ENCODE measurements at regions of chr12 and their contacts with region 1.

Region 1: DNA sequence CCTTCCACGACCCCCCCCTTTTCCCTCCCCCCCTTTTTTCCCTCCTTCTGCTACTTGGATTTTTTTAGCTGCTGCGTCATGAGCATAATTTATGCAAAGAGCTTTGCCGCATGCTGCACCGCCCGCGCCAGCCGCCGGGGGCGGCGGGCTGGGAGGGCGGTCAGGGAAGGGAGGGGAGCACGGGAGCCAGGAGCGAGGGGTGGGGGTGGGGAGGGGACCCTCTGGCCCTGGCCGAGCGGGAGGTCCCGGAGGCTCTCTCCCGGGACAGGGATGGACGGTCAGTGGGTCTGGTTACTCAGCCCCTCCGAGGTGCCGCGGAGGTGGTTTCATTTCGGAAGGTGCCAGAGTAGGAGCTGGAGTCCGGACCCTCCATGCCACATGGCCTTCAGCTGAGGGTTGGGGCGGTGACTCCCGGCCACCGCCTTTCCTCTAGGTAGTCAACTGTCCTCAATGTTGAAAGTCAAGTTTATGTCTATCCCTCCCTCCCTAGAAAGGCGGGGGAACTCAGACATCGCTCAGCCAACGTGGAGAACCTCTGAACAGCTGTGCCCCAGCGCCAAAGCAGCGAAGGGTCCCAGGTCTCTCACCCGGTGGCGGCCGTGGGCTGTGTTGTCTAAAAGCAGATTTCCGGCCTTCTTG is at the start of gene POU6F1:
- DNase-seq: peak; percentile 88
- H3K4me3 ChIP-seq: peak within 1 kb of the TSS; percentile 89 to 98 (median 94)
- H3K27ac ChIP-seq: peak within 1 kb of the TSS; percentile 98 to 100 (median 99)
- H3K4me1 ChIP-seq: peaks cover 0 to 25% (median 16%) of the 10 kb centered on the region in 4 donors
- H3K27me3 ChIP-seq: no peaks in the 10 kb centered on the region
- CTCF ChIP-seq: peak; percentile 23 to 80 (median 44)
- EP300 ChIP-seq: no peak
- POLR2A ChIP-seq: peak in 1 of 2 donors; percentile 16
- total RNA-seq, gene POU6F1: 5.8 to 15.8 (median 8.5) TPM

Region 2: DNA sequence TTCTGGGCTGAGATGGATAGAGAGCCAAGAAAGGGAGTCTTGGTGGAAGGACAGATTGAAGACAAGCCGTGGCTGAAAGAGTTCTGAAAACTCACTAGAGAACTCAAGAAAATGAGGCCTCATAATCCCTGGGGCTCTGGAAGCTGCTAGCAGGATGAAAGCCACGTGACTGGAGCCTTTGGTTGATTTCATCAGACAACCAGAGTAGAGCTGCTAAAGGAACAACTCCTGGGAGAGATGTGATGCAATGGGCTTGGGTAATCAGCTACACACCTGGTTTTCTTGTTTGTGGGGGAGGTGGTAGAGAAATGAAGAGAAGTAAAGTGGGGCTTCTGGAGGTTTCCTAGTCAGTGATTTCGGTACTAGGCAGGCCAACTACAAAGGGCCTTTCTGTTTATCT is 148.1 kb before region 1 on chr12:
- intact Hi-C with region 1: no loop called
- DNase-seq: no peak
- H3K4me3 ChIP-seq: no peak overlapping the region
- H3K27ac ChIP-seq: peak overlapping the region in 1 of 4 donors; percentile 25
- H3K4me1 ChIP-seq: peaks cover 0 to 9% (median 2%) of the 10 kb centered on the region in 4 donors
- H3K27me3 ChIP-seq: no peaks in the 10 kb centered on the region
- CTCF ChIP-seq: no peak
- EP300 ChIP-seq: no peak
- POLR2A ChIP-seq: no peak

Region 3: GRCh38 chr12:51160814-51161459 is 57.1 kb before region 1 on chr12:
- intact Hi-C with region 1: no loop called
- DNase-seq: no peak
- H3K4me3 ChIP-seq: no peak overlapping the region
- H3K27ac ChIP-seq: no peak overlapping the region
- H3K4me1 ChIP-seq: peaks cover 0 to 5% (median 0%) of the 10 kb centered on the region in 4 donors
- H3K27me3 ChIP-seq: no peaks in the 10 kb centered on the region
- CTCF ChIP-seq: no peak
- EP300 ChIP-seq: no peak
- POLR2A ChIP-seq: no peak

Region 4: GRCh38 chr12:51172515-51173431 is 45.3 kb before region 1 on chr12 and contains the start of gene TFCP2:
- intact Hi-C with region 1: loop called (anchors 2 kb)
- DNase-seq: peak; percentile 99
- H3K4me3 ChIP-seq: peak within 1 kb of the TSS; percentile 64 to 86 (median 75)
- H3K27ac ChIP-seq: peak within 1 kb of the TSS; percentile 93 to 98 (median 96)
- H3K4me1 ChIP-seq: peaks cover 0 to 27% (median 18%) of the 10 kb centered on the region in 4 donors
- H3K27me3 ChIP-seq: no peaks in the 10 kb centered on the region
- CTCF ChIP-seq: no peak
- EP300 ChIP-seq: peak in 1 of 4 donors; percentile 13
- POLR2A ChIP-seq: peak; percentile 43 to 62
- total RNA-seq, gene TFCP2: 11.9 to 17.8 (median 13.7) TPM

Region 5: GRCh38 chr12:51238510-51239334 is 20.6 kb after region 1 on chr12 and contains the start of gene DAZAP2:
- intact Hi-C with region 1: loop called (anchors 1 kb)
- DNase-seq: peak; percentile 98
- H3K4me3 ChIP-seq: peak within 1 kb of the TSS; percentile 96 to 100 (median 97)
- H3K27ac ChIP-seq: peak within 1 kb of the TSS; percentile 99 to 100 (median 100)
- H3K4me1 ChIP-seq: peaks cover 0 to 28% (median 22%) of the 10 kb centered on the region in 4 donors
- H3K27me3 ChIP-seq: no peaks in the 10 kb centered on the region
- CTCF ChIP-seq: peak in 2 of 4 experiments; percentile 28 to 39
- EP300 ChIP-seq: peak in 1 of 4 donors; percentile 36
- POLR2A ChIP-seq: peak; percentile 94
- total RNA-seq, gene DAZAP2: 107 to 265 (median 191) TPM

Region 6: DNA sequence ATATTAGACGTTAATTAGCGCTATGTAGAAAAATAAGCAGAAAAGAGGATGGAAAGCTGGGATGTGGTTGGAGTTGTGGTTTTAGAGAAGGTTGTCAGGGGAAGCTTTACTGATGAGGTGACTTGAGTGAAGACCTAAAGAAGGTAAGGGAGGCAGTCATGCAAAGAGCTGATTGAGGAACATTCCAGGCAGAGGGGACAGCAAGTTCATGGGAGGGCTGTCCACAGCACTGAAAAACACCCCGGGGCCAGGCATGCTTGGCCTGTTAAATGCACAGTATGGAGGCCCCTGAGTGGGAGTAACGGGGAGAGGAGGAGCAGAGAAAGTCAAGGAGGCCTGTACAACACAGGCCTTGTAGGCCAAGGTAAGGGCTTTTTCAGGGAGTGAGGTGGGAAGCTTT is 36.5 kb after region 1 on chr12:
- intact Hi-C with region 1: no loop called
- DNase-seq: no peak
- H3K4me3 ChIP-seq: no peak overlapping the region
- H3K27ac ChIP-seq: no peak overlapping the region
- H3K4me1 ChIP-seq: no peaks in the 10 kb centered on the region
- H3K27me3 ChIP-seq: no peaks in the 10 kb centered on the region
- CTCF ChIP-seq: no peak
- EP300 ChIP-seq: no peak
- POLR2A ChIP-seq: no peak

Region 7: GRCh38 chr12:51521554-51522276 is 303.6 kb after region 1 on chr12:
- intact Hi-C with region 1: no loop called
- DNase-seq: no peak
- H3K4me3 ChIP-seq: no peak overlapping the region
- H3K27ac ChIP-seq: no peak overlapping the region
- H3K4me1 ChIP-seq: no peaks in the 10 kb centered on the region
- H3K27me3 ChIP-seq: no peaks in the 10 kb centered on the region
- CTCF ChIP-seq: no peak
- EP300 ChIP-seq: no peak
- POLR2A ChIP-seq: no peak

Measured in sigmoid colon (tissue), 7 donors.